ENCODE measurements at regions of chr18 and their contacts with region 1.

Region 1: DNA sequence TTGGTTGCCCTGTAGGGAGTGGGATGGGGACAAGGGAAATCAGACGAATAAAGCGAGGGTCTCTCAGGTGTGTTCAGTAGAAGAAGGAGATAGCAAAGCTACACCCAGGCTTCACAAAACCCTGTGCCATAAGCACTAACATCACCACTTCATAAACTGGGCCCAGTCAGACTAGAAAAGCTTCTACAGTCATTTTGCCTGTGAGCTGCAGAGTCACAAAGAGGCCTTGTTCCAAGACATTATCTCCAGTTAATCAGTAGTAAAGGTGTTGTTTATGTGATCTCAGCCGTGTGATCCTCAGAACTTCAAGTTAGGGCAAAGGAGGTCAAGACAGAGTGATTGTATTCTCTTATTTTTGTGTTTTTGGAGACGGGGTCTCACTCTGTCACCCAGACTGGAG is 148.0 kb downstream of the GALR1 start:
- DNase-seq: no peak
- H3K4me3 Mint-ChIP-seq: no peak overlapping the region
- H3K27ac Mint-ChIP-seq: no peak overlapping the region
- H3K4me1 Mint-ChIP-seq: no peaks in the 10 kb centered on the region
- H3K27me3 Mint-ChIP-seq: no peaks in the 10 kb centered on the region
- CTCF ChIP-seq: no peak

Region 2: DNA sequence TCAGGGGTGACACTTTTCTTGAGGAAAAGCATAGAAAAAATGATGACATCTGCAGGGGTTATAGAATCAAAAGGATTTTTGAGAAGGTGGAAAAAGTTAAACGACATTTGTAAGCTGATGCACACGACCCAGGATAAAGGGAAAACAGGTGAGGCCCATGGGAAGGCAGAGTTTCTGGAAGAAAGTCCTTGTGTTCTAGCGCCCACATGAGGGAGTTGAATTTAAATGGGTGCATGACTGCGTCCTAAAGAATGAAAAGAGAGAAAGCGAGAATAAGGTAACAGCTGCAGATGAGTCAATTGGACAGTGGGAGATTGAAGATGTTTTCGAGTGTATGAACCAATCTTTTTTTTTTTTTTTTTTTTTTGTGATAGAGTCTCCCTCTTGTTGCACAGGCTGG is 10.1 kb after region 1 on chr18:
- CTCF ChIA-PET with region 1: interaction called, 10 read pairs
- intact Hi-C with region 1: no loop called
- DNase-seq: no peak
- H3K4me3 Mint-ChIP-seq: no peak overlapping the region
- H3K27ac Mint-ChIP-seq: no peak overlapping the region
- H3K4me1 Mint-ChIP-seq: no peaks in the 10 kb centered on the region
- H3K27me3 Mint-ChIP-seq: no peaks in the 10 kb centered on the region
- CTCF ChIP-seq: no peak